Common myeloid progenitor, CD34-positive (primary cell): ENCODE measurements at regions of chr22 and their contacts with region 1.

Region 1: GRCh38 chr22:44684506-44685383 is 17.3 kb upstream of the PRR5 start:
- DNase-seq: peak; percentile 88 to 95 (median 93)
- H3K4me3 ChIP-seq: no peak overlapping the region
- H3K27ac ChIP-seq: no peak overlapping the region
- H3K4me1 ChIP-seq: peaks cover 0 to 48% (median 32%) of the 10 kb centered on the region in 4 experiments
- H3K27me3 ChIP-seq: no peaks in the 10 kb centered on the region

Region 2: GRCh38 chr22:44625981-44626687 is 58.6 kb before region 1 on chr22:
- CTCF ChIA-PET with region 1: interaction called, 10 read pairs
- POLR2A ChIA-PET with region 1: no interaction called
- DNase-seq: peak; percentile 67 to 81 (median 76)
- H3K4me3 ChIP-seq: no peak overlapping the region
- H3K27ac ChIP-seq: no peak overlapping the region
- H3K4me1 ChIP-seq: peaks cover 0 to 5% (median 2%) of the 10 kb centered on the region in 4 experiments
- H3K27me3 ChIP-seq: no peaks in the 10 kb centered on the region

Region 3: GRCh38 chr22:44669561-44669976 is 15.2 kb before region 1 on chr22:
- CTCF ChIA-PET with region 1: interaction called, 26 read pairs
- POLR2A ChIA-PET with region 1: interaction called, 4 read pairs
- DNase-seq: peak in 2 of 3 donors; percentile 48 to 52
- H3K4me3 ChIP-seq: peak overlapping the region in 6 of 7 experiments; percentile 53 to 79 (median 67)
- H3K27ac ChIP-seq: no peak overlapping the region
- H3K4me1 ChIP-seq: peaks cover 2 to 66% (median 53%) of the 10 kb centered on the region in 4 experiments
- H3K27me3 ChIP-seq: no peaks in the 10 kb centered on the region

Region 4: GRCh38 chr22:44697423-44698141 is 12.8 kb after region 1 on chr22:
- CTCF ChIA-PET with region 1: interaction called, 13 read pairs
- POLR2A ChIA-PET with region 1: no interaction called
- DNase-seq: peak; percentile 72 to 85 (median 81)
- H3K4me3 ChIP-seq: no peak overlapping the region
- H3K27ac ChIP-seq: no peak overlapping the region
- H3K4me1 ChIP-seq: peaks cover 2 to 30% (median 23%) of the 10 kb centered on the region in 4 experiments
- H3K27me3 ChIP-seq: no peaks in the 10 kb centered on the region

Region 5: GRCh38 chr22:44718418-44718817 is 33.7 kb after region 1 on chr22:
- CTCF ChIA-PET with region 1: no interaction called
- POLR2A ChIA-PET with region 1: no interaction called
- DNase-seq: no peak
- H3K4me3 ChIP-seq: no peak overlapping the region
- H3K27ac ChIP-seq: no peak overlapping the region
- H3K4me1 ChIP-seq: peaks cover 0 to 9% (median 2%) of the 10 kb centered on the region in 4 experiments
- H3K27me3 ChIP-seq: no peaks in the 10 kb centered on the region